ENCODE measurements at regions of chr19 and their contacts with region 1.

Region 1: GRCh38 chr19:5547881-5548280 is 19.9 kb downstream of the TINCR start:
- DNase-seq: peak; percentile 60
- H3K4me3 ChIP-seq: peak overlapping the region in 1 of 2 experiments; percentile 50; a peak in 1 of 4 replicates
- H3K27ac ChIP-seq: no peak overlapping the region
- H3K4me1 ChIP-seq: no peaks in the 10 kb centered on the region
- H3K27me3 ChIP-seq: no peaks in the 10 kb centered on the region
- CTCF ChIP-seq: peak; percentile 56
- EP300 ChIP-seq: no peak
- RAD21 ChIP-seq: peak; percentile 82

Region 2: DNA sequence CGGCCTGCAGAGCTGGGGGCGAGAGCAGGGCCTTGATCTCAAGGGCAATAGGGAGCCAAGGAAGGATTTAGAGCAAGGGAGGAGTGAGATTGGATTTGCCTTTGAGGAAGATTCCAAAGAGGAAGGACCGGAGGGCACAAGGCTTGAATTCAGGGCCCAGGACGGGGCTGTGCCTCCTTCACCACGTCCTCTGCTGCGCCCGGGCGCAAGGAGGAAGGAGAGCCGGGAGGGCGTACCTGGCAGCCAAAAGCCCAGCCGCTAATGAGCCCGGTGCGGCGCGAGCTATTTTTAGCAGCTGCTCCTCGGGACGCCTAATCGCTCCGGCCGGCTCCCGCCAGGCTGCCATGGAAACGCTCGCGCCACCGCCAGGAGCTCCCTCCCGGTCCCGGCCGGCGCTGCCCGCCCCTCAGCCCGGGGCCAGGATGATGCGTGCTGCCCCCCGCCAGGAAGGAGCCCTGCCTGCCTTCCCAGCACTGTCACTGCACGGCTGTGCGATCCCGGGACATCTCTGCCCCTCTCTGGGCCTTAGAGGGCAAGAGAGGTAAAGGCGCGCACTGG is 11.5 kb before region 1 on chr19:
- CTCF ChIA-PET with region 1: interaction called, 17 read pairs
- POLR2A ChIA-PET with region 1: no interaction called
- DNase-seq: peak; percentile 83
- H3K4me3 ChIP-seq: no peak overlapping the region
- H3K27ac ChIP-seq: no peak overlapping the region
- H3K4me1 ChIP-seq: no peaks in the 10 kb centered on the region; a peak in 1 of 4 replicates
- H3K27me3 ChIP-seq: no peaks in the 10 kb centered on the region
- CTCF ChIP-seq: no peak
- EP300 ChIP-seq: no peak
- RAD21 ChIP-seq: no peak

Region 3: GRCh38 chr19:5572558-5573273 is 24.8 kb after region 1 on chr19:
- CTCF ChIA-PET with region 1: interaction called, 10 read pairs
- POLR2A ChIA-PET with region 1: no interaction called
- DNase-seq: peak; percentile 15
- H3K4me3 ChIP-seq: no peak overlapping the region
- H3K27ac ChIP-seq: no peak overlapping the region
- H3K4me1 ChIP-seq: no peaks in the 10 kb centered on the region
- H3K27me3 ChIP-seq: peaks cover 3% of the 10 kb centered on the region; the same call in 1 of the 2 replicates
- CTCF ChIP-seq: no peak
- EP300 ChIP-seq: no peak
- RAD21 ChIP-seq: no peak

Region 4: DNA sequence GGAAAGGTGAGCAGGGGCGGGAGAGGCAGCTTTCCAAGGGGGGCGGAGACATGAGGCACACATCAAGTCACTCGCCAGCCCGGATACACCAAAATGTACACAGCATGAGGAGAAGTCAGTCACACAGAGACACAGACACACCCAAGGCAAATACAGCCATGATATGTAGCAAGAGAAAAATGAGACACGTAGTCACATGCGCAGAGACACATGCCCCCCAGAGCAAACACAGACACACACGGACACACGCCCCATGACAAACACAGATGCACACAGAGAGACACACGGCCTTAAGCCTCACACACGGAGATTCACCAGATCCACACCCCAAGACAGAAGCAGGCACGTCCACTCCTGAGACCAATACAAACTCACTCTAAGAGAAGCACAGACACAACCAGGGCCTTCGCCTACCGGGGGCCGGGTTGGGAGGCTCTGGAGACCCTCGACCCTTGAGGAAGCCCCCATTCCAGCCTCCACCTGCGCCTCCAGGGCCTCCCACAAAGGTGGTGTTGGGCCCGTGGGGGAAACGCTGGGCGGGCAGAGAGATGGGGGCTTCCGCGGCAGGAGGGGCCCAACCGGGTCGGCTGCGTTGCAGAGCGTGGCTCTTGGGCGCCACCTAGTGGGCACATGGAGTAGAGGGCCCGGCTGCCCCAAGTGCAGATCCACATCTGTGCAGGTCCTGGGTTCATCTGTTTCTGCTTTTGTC is 30.1 kb after region 1 on chr19:
- CTCF ChIA-PET with region 1: interaction called, 16 read pairs
- POLR2A ChIA-PET with region 1: no interaction called
- DNase-seq: peak; percentile 95
- H3K4me3 ChIP-seq: no peak overlapping the region; a peak in 1 of 4 replicates
- H3K27ac ChIP-seq: no peak overlapping the region
- H3K4me1 ChIP-seq: peaks cover 3 to 7% of the 10 kb centered on the region in 2 experiments; a peak in 1 of 4 replicates
- H3K27me3 ChIP-seq: no peaks in the 10 kb centered on the region
- CTCF ChIP-seq: peak; percentile 92
- EP300 ChIP-seq: no peak
- RAD21 ChIP-seq: peak; percentile 90

Region 5: GRCh38 chr19:5651361-5651760 is 103.5 kb after region 1 on chr19:
- CTCF ChIA-PET with region 1: no interaction called
- POLR2A ChIA-PET with region 1: no interaction called
- DNase-seq: no peak
- H3K4me3 ChIP-seq: no peak overlapping the region
- H3K27ac ChIP-seq: no peak overlapping the region
- H3K4me1 ChIP-seq: no peaks in the 10 kb centered on the region
- H3K27me3 ChIP-seq: no peaks in the 10 kb centered on the region
- CTCF ChIP-seq: no peak
- EP300 ChIP-seq: no peak
- RAD21 ChIP-seq: no peak